ENCODE measurements at regions of chr7 and their contacts with region 1.

Region 1: GRCh38 chr7:143380255-143380645 is 895 bp upstream of the ZYX start:
- DNase-seq: peak; percentile 81
- H3K4me3 Mint-ChIP-seq: peak overlapping the region; percentile 85
- H3K27ac Mint-ChIP-seq: peak overlapping the region; percentile 89
- H3K4me1 Mint-ChIP-seq: peaks cover 50% of the 10 kb centered on the region
- H3K27me3 Mint-ChIP-seq: no peaks in the 10 kb centered on the region

Region 2: GRCh38 chr7:143263266-143264195 is 116.7 kb before region 1 on chr7 and contains the start of gene GSTK1:
- intact Hi-C with region 1: loop called (anchors 5 kb)
- DNase-seq: peak; percentile 76
- H3K4me3 Mint-ChIP-seq: peak within 1 kb of the TSS; percentile 97
- H3K27ac Mint-ChIP-seq: peak within 1 kb of the TSS; percentile 94
- H3K4me1 Mint-ChIP-seq: peaks cover 49% of the 10 kb centered on the region
- H3K27me3 Mint-ChIP-seq: no peaks in the 10 kb centered on the region
- total RNA-seq, gene GSTK1: 166 and 168 TPM in 2 replicates

Region 3: GRCh38 chr7:143287935-143288826 is 92.1 kb before region 1 on chr7 and contains the start of gene CASP2:
- intact Hi-C with region 1: loop called (anchors 1 kb)
- DNase-seq: peak; percentile 99
- H3K4me3 Mint-ChIP-seq: peak within 1 kb of the TSS; percentile 95
- H3K27ac Mint-ChIP-seq: peak within 1 kb of the TSS; percentile 87
- H3K4me1 Mint-ChIP-seq: peaks cover 47% of the 10 kb centered on the region
- H3K27me3 Mint-ChIP-seq: no peaks in the 10 kb centered on the region
- total RNA-seq, gene CASP2: 116 and 122 TPM in 2 replicates

Region 4: GRCh38 chr7:143305423-143306070 is 74.7 kb before region 1 on chr7:
- intact Hi-C with region 1: loop called (anchors 5 kb)
- DNase-seq: peak; percentile 36
- H3K4me3 Mint-ChIP-seq: no peak overlapping the region
- H3K27ac Mint-ChIP-seq: peak overlapping the region; percentile 48
- H3K4me1 Mint-ChIP-seq: peaks cover 52% of the 10 kb centered on the region
- H3K27me3 Mint-ChIP-seq: no peaks in the 10 kb centered on the region

Region 5: DNA sequence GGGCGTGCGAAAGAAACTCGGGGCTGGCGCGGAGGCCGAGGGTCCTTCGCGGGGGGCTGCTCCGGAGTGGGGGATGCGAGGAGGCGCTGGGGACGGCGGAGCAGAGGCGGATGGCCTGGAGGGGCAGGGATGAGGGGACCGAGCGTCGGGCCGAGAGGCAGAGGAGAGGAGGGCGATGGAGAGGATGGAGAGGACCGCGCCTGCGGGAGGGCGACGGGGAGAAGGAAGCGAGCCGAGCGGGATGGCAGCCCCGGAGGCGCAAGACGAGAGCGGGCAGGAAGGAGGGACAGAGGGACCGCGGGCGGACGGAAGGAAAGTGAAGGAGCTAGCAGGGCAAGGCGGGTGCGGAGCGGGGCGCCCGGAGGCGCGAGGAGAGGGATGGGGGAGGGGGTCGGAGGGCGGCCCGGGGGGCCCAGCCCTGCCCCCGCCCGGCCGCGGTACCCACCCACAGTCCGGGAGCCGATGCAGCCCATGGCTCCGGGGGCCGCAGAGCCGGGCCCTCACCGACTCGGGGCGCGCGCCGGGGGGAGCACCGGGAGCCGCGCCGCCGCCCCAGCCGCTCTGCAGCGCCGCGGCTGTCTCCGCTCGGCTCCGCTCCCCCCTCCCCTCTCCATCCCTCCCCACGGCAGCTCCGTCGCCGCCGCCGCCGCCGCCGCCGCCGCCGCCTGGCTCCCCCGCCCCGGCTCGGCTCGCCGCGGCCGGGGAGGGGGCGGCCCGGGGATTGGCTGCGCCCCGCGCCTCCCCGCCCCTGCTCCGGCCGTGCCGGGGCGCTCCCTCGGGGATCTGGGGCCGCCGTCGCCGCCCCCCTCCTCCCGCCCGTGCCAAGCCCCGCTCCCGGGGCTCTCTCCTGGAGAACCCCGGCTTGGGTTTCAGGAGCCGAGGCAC is 17.9 kb before region 1 on chr7 and contains the start of gene FAM131B:
- intact Hi-C with region 1: loop called (anchors 2 kb)
- DNase-seq: no peak
- H3K4me3 Mint-ChIP-seq: peak within 1 kb of the TSS; percentile 81
- H3K27ac Mint-ChIP-seq: no peak within 1 kb of the TSS
- H3K4me1 Mint-ChIP-seq: peaks cover 9% of the 10 kb centered on the region
- H3K27me3 Mint-ChIP-seq: peaks cover 73% of the 10 kb centered on the region
- total RNA-seq, gene FAM131B: 1.3 and 2.0 TPM in 2 replicates

Region 6: DNA sequence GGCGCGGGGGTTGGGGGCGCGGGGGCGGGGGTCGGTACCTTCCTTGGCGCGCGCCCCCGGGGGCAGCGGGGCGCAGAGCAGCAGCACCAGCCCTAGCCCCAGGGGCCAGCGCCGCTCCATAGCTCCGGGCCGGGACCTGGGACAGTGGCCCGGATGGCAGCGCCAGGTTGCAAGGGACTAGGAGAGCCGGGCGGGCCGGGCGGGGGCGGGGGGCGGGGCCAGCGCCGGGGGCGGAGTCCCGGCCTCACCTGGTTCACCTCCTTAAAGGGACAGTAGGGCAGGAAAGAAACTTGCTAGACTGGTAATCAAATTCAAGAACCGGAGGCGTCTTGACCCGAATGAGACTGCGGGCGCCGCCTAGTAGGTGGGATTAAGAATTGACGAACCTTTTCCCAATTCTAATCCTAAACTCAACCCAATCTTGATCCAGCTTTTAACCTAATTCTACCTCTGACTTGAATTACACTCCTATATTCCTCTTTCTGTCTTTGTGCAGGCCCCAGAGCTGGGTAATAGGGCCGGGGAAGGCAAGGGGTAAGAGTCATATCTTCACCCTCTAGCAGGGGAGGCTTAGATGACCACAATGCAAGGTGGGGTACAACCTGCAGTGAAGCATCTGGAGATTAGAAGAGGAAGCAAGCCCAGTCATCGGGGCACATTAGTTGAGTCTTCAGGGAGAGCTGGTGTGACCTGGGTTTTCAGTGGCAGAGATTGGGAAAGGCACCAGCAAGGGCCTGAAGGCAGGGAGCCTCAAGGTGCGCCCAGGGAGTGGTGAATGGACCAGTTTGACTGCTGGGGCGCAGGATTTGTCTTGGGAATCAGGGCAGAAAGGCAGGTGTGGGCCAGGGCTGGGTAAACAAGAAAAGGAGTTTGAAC is 28.7 kb after region 1 on chr7 and contains the start of gene EPHA1:
- intact Hi-C with region 1: loop called (anchors 1 kb)
- DNase-seq: no peak
- H3K4me3 Mint-ChIP-seq: peak within 1 kb of the TSS; percentile 45
- H3K27ac Mint-ChIP-seq: no peak within 1 kb of the TSS
- H3K4me1 Mint-ChIP-seq: peaks cover 23% of the 10 kb centered on the region
- H3K27me3 Mint-ChIP-seq: peaks cover 32% of the 10 kb centered on the region
- total RNA-seq, gene EPHA1: 0.07 and 0.34 TPM in 2 replicates

Region 7: DNA sequence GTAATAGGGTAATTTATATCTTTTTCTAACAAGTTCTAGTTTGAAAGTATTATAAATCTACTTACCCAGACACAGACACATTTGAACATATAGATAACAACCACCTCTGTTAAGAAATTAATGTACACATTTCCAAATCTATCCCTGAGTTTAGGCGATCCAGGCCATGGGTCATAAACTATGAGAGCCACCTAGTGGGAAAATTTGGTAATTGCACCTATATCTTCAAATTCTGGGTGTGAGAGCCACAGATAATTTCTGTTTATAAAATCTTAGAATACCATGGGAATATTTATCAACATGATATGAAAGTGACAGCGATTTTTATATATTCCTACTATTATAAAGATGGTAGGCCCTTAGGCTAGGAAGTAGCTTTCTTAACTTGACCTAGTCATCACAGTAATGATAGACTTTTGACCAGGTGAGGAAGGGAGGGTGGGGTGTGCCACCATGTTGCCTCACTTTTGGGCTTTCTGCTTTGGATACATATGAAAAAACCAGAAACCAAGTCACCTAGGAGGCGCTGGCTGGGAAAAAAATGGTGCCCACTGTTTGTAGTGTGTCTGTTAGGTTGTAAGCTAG is 36.4 kb after region 1 on chr7:
- intact Hi-C with region 1: loop called (anchors 2 kb)
- DNase-seq: no peak
- H3K4me3 Mint-ChIP-seq: no peak overlapping the region
- H3K27ac Mint-ChIP-seq: no peak overlapping the region
- H3K4me1 Mint-ChIP-seq: no peaks in the 10 kb centered on the region
- H3K27me3 Mint-ChIP-seq: peaks cover 26% of the 10 kb centered on the region